Posterior vena cava (tissue), 2 donors: ENCODE measurements at regions of chr1 and their contacts with region 1.

Region 1: GRCh38 chr1:158717344-158717743 is 3.2 kb downstream of the OR6K3 start:
- DNase-seq: no peak

Region 2: GRCh38 chr1:158681606-158682005 is 35.7 kb before region 1 on chr1:
- intact Hi-C with region 1: loop called in 1 of 2 experiments (anchors 1 kb)
- DNase-seq: no peak